Naive thymus-derived CD4-positive, alpha-beta T cell (primary cell): ENCODE measurements at regions of chr4 and their contacts with region 1.

Region 1: GRCh38 chr4:37891260-37892159 is 626 bp downstream of the TBC1D1 start:
- DNase-seq: peak; percentile 37 to 70 (median 58)
- ATAC-seq: peak; percentile 68
- H3K4me3 ChIP-seq: peak overlapping the region; percentile 51
- H3K4me3 Mint-ChIP-seq: peak overlapping the region; percentile 88 to 100 (median 96)
- H3K27ac ChIP-seq: peak overlapping the region; percentile 69
- H3K27ac Mint-ChIP-seq: peak overlapping the region; percentile 86 to 97 (median 92)
- H3K4me1 ChIP-seq: peaks cover 10 to 25% of the 10 kb centered on the region in 2 donors
- H3K4me1 Mint-ChIP-seq: peaks cover 28 to 66% (median 55%) of the 10 kb centered on the region in 7 donors
- H3K27me3 ChIP-seq: no peaks in the 10 kb centered on the region
- H3K27me3 Mint-ChIP-seq: peaks cover 0 to 5% (median 0%) of the 10 kb centered on the region in 5 donors

Region 2: GRCh38 chr4:37452952-37453280 is 438.6 kb before region 1 on chr4:
- CTCF ChIA-PET with region 1: no interaction called
- POLR2A ChIA-PET with region 1: no interaction called
- intact Hi-C with region 1: loop called in 1 of 2 experiments (anchors 2 kb)
- DNase-seq: peak in 7 of 9 donors; percentile 21 to 57 (median 46)
- ATAC-seq: peak; percentile 64
- H3K4me3 ChIP-seq: peak overlapping the region; percentile 66
- H3K4me3 Mint-ChIP-seq: peak overlapping the region; percentile 79 to 89 (median 86)
- H3K27ac ChIP-seq: no peak overlapping the region
- H3K27ac Mint-ChIP-seq: peak overlapping the region in 2 of 9 donors; percentile 18 to 38
- H3K4me1 ChIP-seq: peaks cover 0 to 14% of the 10 kb centered on the region in 2 donors
- H3K4me1 Mint-ChIP-seq: peaks cover 0 to 18% (median 14%) of the 10 kb centered on the region in 7 donors
- H3K27me3 ChIP-seq: peaks cover 0 to 4% of the 10 kb centered on the region in 2 donors
- H3K27me3 Mint-ChIP-seq: peaks cover 31 to 80% (median 61%) of the 10 kb centered on the region in 5 donors

Region 3: DNA sequence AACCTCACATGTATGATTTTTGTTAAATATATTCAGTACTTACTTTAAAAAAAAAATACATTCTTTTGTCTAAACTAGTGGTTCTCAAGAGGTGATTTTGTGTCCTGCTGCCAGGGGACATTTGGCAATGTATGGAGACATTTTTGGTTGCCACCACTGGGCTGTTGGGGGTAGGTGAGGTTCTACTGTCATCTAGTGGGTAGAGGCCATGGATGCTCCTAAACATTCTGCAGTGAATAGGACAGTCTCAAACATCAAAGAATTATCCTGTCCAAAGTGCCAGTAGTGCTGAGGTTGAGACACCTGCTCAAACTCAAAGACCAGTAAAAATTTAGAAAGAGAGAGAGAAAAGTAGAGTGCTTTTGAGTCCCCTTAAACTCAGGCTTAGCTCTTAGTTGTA is 97.9 kb before region 1 on chr4:
- CTCF ChIA-PET with region 1: no interaction called
- POLR2A ChIA-PET with region 1: no interaction called
- intact Hi-C with region 1: no loop called
- DNase-seq: peak in 5 of 9 donors; percentile 33 to 44 (median 39)
- ATAC-seq: peak; percentile 80
- H3K4me3 ChIP-seq: no peak overlapping the region
- H3K4me3 Mint-ChIP-seq: no peak overlapping the region
- H3K27ac ChIP-seq: no peak overlapping the region
- H3K27ac Mint-ChIP-seq: peak overlapping the region in 1 of 9 donors; percentile 49
- H3K4me1 ChIP-seq: no peaks in the 10 kb centered on the region
- H3K4me1 Mint-ChIP-seq: peaks cover 0 to 3% (median under 1%) of the 10 kb centered on the region in 7 donors
- H3K27me3 ChIP-seq: no peaks in the 10 kb centered on the region
- H3K27me3 Mint-ChIP-seq: peaks cover 0 to 22% (median 0%) of the 10 kb centered on the region in 5 donors

Region 4: DNA sequence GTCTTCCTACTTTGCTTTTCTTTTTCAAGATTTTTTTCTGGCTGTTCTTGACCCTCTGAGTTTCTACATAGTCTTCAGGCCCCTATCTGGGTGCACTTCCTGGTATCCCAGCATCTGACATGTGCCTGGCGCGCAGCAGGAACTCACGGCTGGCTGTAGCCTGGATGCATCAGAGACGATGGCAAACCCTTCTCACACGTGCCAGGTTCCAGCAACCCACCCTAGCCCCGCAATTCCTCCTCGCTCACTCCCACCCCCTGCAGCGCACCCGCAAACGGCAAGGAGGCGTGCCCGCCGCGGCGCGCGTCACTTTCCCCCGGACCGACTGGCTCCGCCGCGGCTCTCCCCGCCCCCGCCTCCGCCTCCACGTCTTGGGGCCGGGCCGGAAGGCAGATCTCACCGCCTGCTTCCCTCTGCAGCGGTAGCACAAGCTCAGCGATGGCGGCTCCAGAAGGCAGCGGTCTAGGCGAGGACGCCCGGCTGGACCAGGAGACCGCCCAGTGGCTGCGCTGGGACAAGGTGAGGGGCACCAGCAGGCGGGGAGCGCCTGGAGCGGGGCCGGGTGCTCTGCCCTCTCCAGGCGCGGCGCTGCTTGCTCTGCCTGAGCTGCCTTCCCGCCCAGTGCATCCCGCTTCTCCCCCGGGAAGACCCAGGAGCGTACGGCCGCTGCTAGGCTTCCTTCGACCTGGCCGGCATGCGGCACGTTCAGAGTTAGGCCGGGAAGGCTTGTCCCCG is 65.0 kb before region 1 on chr4 and contains the start of gene PGM2:
- CTCF ChIA-PET with region 1: no interaction called
- POLR2A ChIA-PET with region 1: interaction called, 15 read pairs
- intact Hi-C with region 1: loop called (anchors 1 kb)
- DNase-seq: peak; percentile 84 to 94 (median 90)
- ATAC-seq: peak; percentile 99
- H3K4me3 ChIP-seq: peak within 1 kb of the TSS; percentile 79
- H3K4me3 Mint-ChIP-seq: peak within 1 kb of the TSS; percentile 93 to 100 (median 98)
- H3K27ac ChIP-seq: peak within 1 kb of the TSS; percentile 80
- H3K27ac Mint-ChIP-seq: peak within 1 kb of the TSS; percentile 92 to 99 (median 96)
- H3K4me1 ChIP-seq: peaks cover 7 to 11% of the 10 kb centered on the region in 2 donors
- H3K4me1 Mint-ChIP-seq: peaks cover 34 to 70% (median 55%) of the 10 kb centered on the region in 7 donors
- H3K27me3 ChIP-seq: no peaks in the 10 kb centered on the region
- H3K27me3 Mint-ChIP-seq: peaks cover 0 to 5% (median 0%) of the 10 kb centered on the region in 5 donors
- total RNA-seq, gene PGM2: 14.4 to 35.2 (median 18.7) TPM

Region 5: GRCh38 chr4:37928426-37929416 is 37.2 kb after region 1 on chr4:
- CTCF ChIA-PET with region 1: interaction called, 4 read pairs
- POLR2A ChIA-PET with region 1: no interaction called
- intact Hi-C with region 1: loop called (anchors 2 to 5 kb)
- DNase-seq: peak in 1 of 9 donors; percentile 15
- ATAC-seq: peak; percentile 34
- H3K4me3 ChIP-seq: no peak overlapping the region
- H3K4me3 Mint-ChIP-seq: peak overlapping the region in 2 of 10 donors; percentile 16 to 57
- H3K27ac ChIP-seq: no peak overlapping the region
- H3K27ac Mint-ChIP-seq: peak overlapping the region in 2 of 9 donors; percentile 4 to 67
- H3K4me1 ChIP-seq: peaks cover 9 to 11% of the 10 kb centered on the region in 2 donors
- H3K4me1 Mint-ChIP-seq: peaks cover 14 to 50% (median 39%) of the 10 kb centered on the region in 7 donors
- H3K27me3 ChIP-seq: no peaks in the 10 kb centered on the region
- H3K27me3 Mint-ChIP-seq: no peaks in the 10 kb centered on the region

Region 6: GRCh38 chr4:38034986-38035882 is 143.7 kb after region 1 on chr4:
- CTCF ChIA-PET with region 1: interaction called, 4 read pairs
- POLR2A ChIA-PET with region 1: interaction called, 3 read pairs
- intact Hi-C with region 1: loop called (anchors 1 to 5 kb)
- DNase-seq: peak in 7 of 9 donors; percentile 29 to 66 (median 53)
- ATAC-seq: peak; percentile 68
- H3K4me3 ChIP-seq: no peak overlapping the region
- H3K4me3 Mint-ChIP-seq: no peak overlapping the region
- H3K27ac ChIP-seq: no peak overlapping the region
- H3K27ac Mint-ChIP-seq: no peak overlapping the region
- H3K4me1 ChIP-seq: no peaks in the 10 kb centered on the region
- H3K4me1 Mint-ChIP-seq: peaks cover 0 to 6% (median 0%) of the 10 kb centered on the region in 7 donors
- H3K27me3 ChIP-seq: no peaks in the 10 kb centered on the region
- H3K27me3 Mint-ChIP-seq: no peaks in the 10 kb centered on the region

Region 7: DNA sequence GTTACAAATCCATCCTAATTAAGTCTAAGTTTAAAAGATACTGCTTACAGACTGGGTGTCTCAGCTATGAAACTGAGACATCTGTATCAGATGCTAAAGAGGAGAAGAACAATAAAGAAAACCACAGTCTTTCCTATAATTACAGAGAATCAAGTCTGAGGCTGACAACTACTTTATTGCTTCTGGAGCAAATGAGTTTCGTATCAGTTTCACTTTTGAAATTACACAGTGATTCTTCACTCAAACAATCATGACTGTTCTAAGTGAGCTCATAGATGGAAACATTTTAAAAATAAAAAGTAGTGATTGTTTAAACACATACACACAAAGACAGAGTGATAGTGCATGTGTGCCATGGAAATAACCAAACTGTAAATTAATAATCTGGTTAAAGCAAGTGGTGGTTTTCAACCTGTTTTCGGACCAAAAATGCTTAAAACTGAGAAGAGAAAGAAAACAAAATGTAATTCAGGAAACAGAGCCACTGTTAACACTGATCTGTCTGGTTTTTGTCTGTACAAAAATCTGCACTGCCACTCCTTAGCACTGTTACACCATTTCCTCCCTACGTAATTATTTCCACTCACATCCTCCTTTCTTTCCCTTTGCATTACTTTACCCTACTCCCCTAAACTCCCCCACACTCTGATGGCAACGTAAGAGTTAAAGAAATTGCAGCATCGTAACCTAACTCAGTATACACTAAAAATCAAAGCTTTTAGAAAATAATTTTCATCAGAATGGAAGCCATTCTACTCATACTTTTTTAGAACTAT is 1462.2 kb after region 1 on chr4:
- CTCF ChIA-PET with region 1: no interaction called
- POLR2A ChIA-PET with region 1: no interaction called
- intact Hi-C with region 1: loop called in 1 of 2 experiments (anchors 2 kb)
- DNase-seq: peak in 7 of 9 donors; percentile 39 to 71 (median 63)
- ATAC-seq: peak; percentile 86
- H3K4me3 ChIP-seq: peak overlapping the region; percentile 48
- H3K4me3 Mint-ChIP-seq: peak overlapping the region; percentile 82 to 89 (median 84)
- H3K27ac ChIP-seq: peak overlapping the region; percentile 70
- H3K27ac Mint-ChIP-seq: peak overlapping the region; percentile 88 to 98 (median 95)
- H3K4me1 ChIP-seq: peaks cover 17 to 34% of the 10 kb centered on the region in 2 donors
- H3K4me1 Mint-ChIP-seq: peaks cover 20 to 75% (median 59%) of the 10 kb centered on the region in 7 donors
- H3K27me3 ChIP-seq: no peaks in the 10 kb centered on the region
- H3K27me3 Mint-ChIP-seq: no peaks in the 10 kb centered on the region